ENCODE measurements at regions of chr1 and their contacts with region 1.

Region 1: DNA sequence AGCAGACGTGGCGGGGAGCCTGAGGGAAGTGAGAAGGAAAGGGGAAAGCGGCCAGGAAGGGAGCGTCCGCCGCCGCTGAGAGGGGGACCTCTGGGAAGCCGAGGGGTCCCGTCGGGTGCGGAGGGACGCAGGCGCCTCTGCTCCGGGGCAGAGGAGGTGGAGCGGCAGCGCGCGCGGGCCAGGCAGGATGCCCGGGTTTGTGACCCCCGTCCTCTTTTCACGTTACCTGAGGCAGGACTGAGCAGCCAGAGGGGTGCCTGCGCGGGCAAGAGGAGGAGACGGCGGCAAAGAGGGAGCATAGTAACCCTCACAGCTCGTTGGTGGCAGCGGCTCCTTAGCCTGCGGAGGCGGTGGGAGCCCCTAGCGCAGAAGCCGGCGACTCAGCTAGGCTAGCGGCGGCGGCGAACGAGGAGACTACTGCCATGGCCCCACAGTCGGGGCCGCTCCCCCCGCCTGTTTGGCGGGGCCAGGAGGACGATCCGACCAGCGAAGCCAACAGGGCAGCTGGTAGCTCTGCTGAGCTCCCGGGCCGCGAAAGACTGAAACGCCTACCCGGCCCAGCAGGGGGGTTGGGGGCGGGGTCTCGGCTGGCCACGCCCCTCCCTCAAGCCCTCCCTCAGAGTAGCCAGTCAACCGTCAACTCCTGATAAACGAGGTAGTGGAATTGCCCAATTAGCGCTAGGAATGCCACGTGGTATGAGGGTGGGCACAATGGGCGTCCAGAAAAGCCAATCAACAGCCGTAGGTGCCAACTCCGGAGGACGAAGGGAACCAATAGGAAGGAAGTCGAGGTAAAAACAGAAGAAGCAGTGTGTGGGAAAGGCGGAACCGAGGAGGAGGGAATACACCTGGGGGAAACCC is at the start of gene TESK2:
- DNase-seq: peak; percentile 94 to 100 (median 95)
- ATAC-seq: peak; percentile 91
- H3K4me3 ChIP-seq: peak within 1 kb of the TSS; percentile 74 to 91
- H3K4me3 Mint-ChIP-seq: no peak within 1 kb of the TSS
- H3K27ac ChIP-seq: peak within 1 kb of the TSS; percentile 49 to 72
- H3K27ac Mint-ChIP-seq: no peak within 1 kb of the TSS
- H3K4me1 ChIP-seq: peaks cover 11% of the 10 kb centered on the region
- H3K4me1 Mint-ChIP-seq: peaks cover 16% of the 10 kb centered on the region
- H3K27me3 ChIP-seq: peaks cover 0 to 3% of the 10 kb centered on the region in 2 experiments
- H3K27me3 Mint-ChIP-seq: no peaks in the 10 kb centered on the region
- CTCF ChIP-seq: no peak
- total RNA-seq, gene TESK2: 4.6 to 5.8 TPM

Region 2: DNA sequence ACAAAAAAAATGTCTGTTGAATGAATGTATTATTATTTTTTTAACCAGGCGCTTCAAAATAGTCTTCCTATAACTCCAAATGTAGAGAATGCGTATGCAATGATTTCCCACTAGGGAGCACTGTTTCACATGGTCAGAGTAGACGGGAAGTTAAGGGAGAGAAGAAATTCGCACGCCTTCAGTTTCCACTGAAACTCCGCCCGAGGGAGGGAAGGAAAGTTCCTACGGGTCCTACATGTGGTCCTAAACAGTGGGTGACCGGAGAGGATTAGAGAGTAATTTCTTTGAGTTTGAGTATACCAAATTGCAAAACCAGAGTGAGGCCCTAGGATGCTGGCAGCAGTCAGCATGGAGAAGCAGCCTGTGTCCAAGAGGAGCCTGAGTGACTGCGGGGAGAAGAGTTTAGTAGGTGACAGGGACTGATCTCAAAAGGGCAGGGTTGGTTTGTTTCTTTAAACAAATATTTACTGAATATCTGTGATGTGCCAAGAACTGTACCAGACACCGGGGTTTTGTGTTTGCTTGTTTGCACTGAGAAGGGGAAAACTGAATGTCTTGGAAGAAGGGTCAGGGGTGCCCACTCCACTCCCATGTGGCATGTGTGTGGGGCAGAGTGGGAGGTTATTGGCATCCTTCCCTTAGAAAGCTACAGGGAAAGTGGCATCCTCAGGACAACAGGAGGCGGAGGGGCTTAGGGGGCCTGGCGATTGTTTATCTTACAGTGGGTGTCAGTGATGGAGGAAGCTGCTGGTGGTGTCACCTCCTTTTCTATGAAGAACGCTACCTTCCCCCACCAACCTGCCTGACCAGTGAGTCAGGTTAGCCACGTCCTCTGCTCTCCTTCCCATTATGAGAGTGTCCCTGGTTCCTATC is 782.7 kb before region 1 on chr1:
- CTCF ChIA-PET with region 1: no interaction called
- POLR2A ChIA-PET with region 1: no interaction called
- intact Hi-C with region 1: loop called in 1 of 2 experiments (anchors 2 kb)
- DNase-seq: peak in 5 of 9 experiments; percentile 26 to 74 (median 59)
- ATAC-seq: peak; percentile 86
- H3K4me3 ChIP-seq: peak overlapping the region in 1 of 2 experiments; percentile 7
- H3K4me3 Mint-ChIP-seq: peak overlapping the region; percentile 61
- H3K27ac ChIP-seq: no peak overlapping the region
- H3K27ac Mint-ChIP-seq: no peak overlapping the region
- H3K4me1 ChIP-seq: peaks cover 5% of the 10 kb centered on the region
- H3K4me1 Mint-ChIP-seq: peaks cover 9% of the 10 kb centered on the region
- H3K27me3 ChIP-seq: peaks cover 0 to 4% of the 10 kb centered on the region in 2 experiments
- H3K27me3 Mint-ChIP-seq: no peaks in the 10 kb centered on the region
- CTCF ChIP-seq: peak; percentile 66

Region 3: GRCh38 chr1:44721485-44722361 is 769.1 kb before region 1 on chr1:
- CTCF ChIA-PET with region 1: no interaction called
- POLR2A ChIA-PET with region 1: no interaction called
- intact Hi-C with region 1: loop called (anchors 5 kb)
- DNase-seq: peak; percentile 36 to 92 (median 61)
- ATAC-seq: peak; percentile 84
- H3K4me3 ChIP-seq: peak overlapping the region in 1 of 2 experiments; percentile 11
- H3K4me3 Mint-ChIP-seq: peak overlapping the region; percentile 54
- H3K27ac ChIP-seq: peak overlapping the region; percentile 70 to 88
- H3K27ac Mint-ChIP-seq: peak overlapping the region; percentile 96
- H3K4me1 ChIP-seq: peaks cover 77% of the 10 kb centered on the region
- H3K4me1 Mint-ChIP-seq: peaks cover 73% of the 10 kb centered on the region
- H3K27me3 ChIP-seq: no peaks in the 10 kb centered on the region
- H3K27me3 Mint-ChIP-seq: no peaks in the 10 kb centered on the region
- CTCF ChIP-seq: no peak

Region 4: DNA sequence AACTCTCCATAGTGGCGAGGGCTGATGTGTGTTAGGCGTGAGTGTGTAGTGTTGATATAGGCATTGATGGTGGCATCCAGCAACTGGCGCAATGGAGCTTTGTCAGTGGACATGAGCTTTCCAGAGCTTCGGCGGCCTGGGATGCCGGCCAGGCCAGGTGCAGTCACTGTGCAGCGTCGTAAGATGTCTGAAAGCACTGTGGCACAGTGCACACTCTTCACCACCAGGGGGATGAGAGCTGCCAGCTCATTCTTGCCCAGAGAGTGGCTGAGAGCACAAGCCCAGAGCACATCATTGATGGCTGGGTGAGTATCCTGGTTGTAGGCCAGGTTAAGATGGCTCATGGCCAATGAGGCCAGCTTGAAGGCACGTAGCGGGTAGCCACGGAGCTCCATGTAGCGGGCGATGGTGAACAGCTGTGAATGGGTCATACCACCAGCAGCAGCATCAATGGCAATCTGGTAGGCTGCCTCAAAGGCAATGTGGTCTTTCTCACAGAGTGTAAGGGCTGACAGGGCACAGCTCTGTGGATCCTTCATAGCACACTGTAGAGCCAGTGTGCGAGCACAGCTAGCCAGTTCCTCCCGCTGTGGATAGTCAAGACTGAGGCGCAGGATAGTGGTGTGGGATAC is 472.1 kb before region 1 on chr1:
- CTCF ChIA-PET with region 1: interaction called, 116 read pairs
- POLR2A ChIA-PET with region 1: interaction called, 4 read pairs
- intact Hi-C with region 1: loop called (anchors 1 kb)
- DNase-seq: peak; percentile 26 to 72 (median 58)
- ATAC-seq: peak; percentile 85
- H3K4me3 ChIP-seq: no peak overlapping the region
- H3K4me3 Mint-ChIP-seq: no peak overlapping the region
- H3K27ac ChIP-seq: no peak overlapping the region
- H3K27ac Mint-ChIP-seq: no peak overlapping the region
- H3K4me1 ChIP-seq: peaks cover 3% of the 10 kb centered on the region
- H3K4me1 Mint-ChIP-seq: peaks cover 12% of the 10 kb centered on the region
- H3K27me3 ChIP-seq: no peaks in the 10 kb centered on the region
- H3K27me3 Mint-ChIP-seq: no peaks in the 10 kb centered on the region
- CTCF ChIP-seq: peak; percentile 59

Region 5: GRCh38 chr1:45359882-45360513 is 130.9 kb before region 1 on chr1:
- CTCF ChIA-PET with region 1: interaction called, 182 read pairs
- POLR2A ChIA-PET with region 1: no interaction called
- intact Hi-C with region 1: loop called (anchors 1 kb)
- DNase-seq: peak in 7 of 9 experiments; percentile 16 to 70 (median 47)
- ATAC-seq: peak; percentile 55
- H3K4me3 ChIP-seq: no peak overlapping the region
- H3K4me3 Mint-ChIP-seq: no peak overlapping the region
- H3K27ac ChIP-seq: no peak overlapping the region
- H3K27ac Mint-ChIP-seq: no peak overlapping the region
- H3K4me1 ChIP-seq: no peaks in the 10 kb centered on the region
- H3K4me1 Mint-ChIP-seq: peaks cover 6% of the 10 kb centered on the region
- H3K27me3 ChIP-seq: no peaks in the 10 kb centered on the region
- H3K27me3 Mint-ChIP-seq: no peaks in the 10 kb centered on the region
- CTCF ChIP-seq: peak; percentile 55

Region 6: GRCh38 chr1:45569962-45570581 is 79.2 kb after region 1 on chr1:
- CTCF ChIA-PET with region 1: interaction called, 21 read pairs
- POLR2A ChIA-PET with region 1: no interaction called
- intact Hi-C with region 1: no loop called
- DNase-seq: peak; percentile 33 to 83 (median 72)
- ATAC-seq: peak; percentile 99
- H3K4me3 ChIP-seq: no peak overlapping the region
- H3K4me3 Mint-ChIP-seq: no peak overlapping the region
- H3K27ac ChIP-seq: no peak overlapping the region
- H3K27ac Mint-ChIP-seq: peak overlapping the region; percentile 22
- H3K4me1 ChIP-seq: no peaks in the 10 kb centered on the region
- H3K4me1 Mint-ChIP-seq: no peaks in the 10 kb centered on the region
- H3K27me3 ChIP-seq: no peaks in the 10 kb centered on the region
- H3K27me3 Mint-ChIP-seq: no peaks in the 10 kb centered on the region
- CTCF ChIP-seq: peak; percentile 92

Region 7: GRCh38 chr1:46285730-46286477 is 795.0 kb after region 1 on chr1:
- CTCF ChIA-PET with region 1: no interaction called
- POLR2A ChIA-PET with region 1: no interaction called
- intact Hi-C with region 1: no loop called
- DNase-seq: peak in 6 of 9 experiments; percentile 15 to 61 (median 46)
- ATAC-seq: peak; percentile 80
- H3K4me3 ChIP-seq: no peak overlapping the region
- H3K4me3 Mint-ChIP-seq: no peak overlapping the region
- H3K27ac ChIP-seq: no peak overlapping the region
- H3K27ac Mint-ChIP-seq: peak overlapping the region; percentile 45
- H3K4me1 ChIP-seq: peaks cover 9% of the 10 kb centered on the region
- H3K4me1 Mint-ChIP-seq: peaks cover 18% of the 10 kb centered on the region
- H3K27me3 ChIP-seq: no peaks in the 10 kb centered on the region
- H3K27me3 Mint-ChIP-seq: no peaks in the 10 kb centered on the region
- CTCF ChIP-seq: no peak

Measured in CD8-positive, alpha-beta T cell (primary cell).